ENCODE measurements at regions of chr1 and their contacts with region 1.

Region 1: DNA sequence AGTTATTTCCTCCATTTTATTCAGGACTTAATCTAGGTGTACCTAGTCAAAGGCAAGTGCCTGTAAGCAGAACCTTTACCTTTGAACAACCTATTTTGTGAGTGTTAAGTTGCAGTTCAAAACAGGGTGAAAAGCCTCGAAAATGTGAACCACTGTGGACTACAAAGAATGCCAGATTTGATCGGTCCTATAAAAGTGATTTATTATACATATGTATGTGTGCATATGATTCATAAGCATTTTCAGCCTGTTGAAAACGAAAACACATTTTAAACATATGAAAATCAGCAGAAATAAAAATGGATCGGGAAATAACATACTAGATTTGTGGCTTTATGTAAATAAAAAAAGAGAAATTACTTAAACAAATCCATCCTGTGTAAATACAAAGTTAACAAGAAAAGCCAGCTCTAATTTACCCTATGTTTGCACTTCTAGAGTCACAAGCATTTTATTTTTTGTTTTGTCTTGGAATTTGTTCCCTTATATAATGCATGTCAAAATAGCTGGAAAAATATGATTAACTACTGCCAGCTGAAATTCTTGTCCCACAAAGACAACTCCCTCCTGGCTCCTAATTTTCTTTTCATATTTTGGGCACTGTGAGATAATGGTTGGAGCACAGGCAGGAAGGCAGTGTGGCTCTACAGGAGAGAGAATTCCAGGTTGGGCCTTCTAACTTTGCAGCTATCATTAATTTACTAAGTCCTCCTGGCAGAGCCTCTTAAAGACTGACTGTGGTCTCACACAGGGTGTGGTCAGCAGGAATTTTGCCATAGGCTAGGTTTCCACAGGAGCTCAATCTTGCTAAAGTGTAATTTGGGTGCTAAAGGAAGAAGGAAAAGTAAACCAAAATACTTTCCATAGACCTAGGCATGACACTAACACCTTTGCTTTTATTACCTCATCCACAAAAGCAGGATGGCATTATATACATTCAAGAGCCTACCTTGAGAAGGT is 70.2 kb upstream of the CDC42BPA start:
- DNase-seq: no peak
- ATAC-seq: no peak
- H3K4me3 ChIP-seq: no peak overlapping the region
- H3K4me3 Mint-ChIP-seq: no peak overlapping the region
- H3K27ac ChIP-seq: no peak overlapping the region
- H3K27ac Mint-ChIP-seq: no peak overlapping the region
- H3K4me1 ChIP-seq: no peaks in the 10 kb centered on the region
- H3K4me1 Mint-ChIP-seq: no peaks in the 10 kb centered on the region
- H3K27me3 ChIP-seq: no peaks in the 10 kb centered on the region
- H3K27me3 Mint-ChIP-seq: peaks cover 11% of the 10 kb centered on the region
- CTCF ChIP-seq: no peak

Region 2: GRCh38 chr1:227946624-227947385 is 558.3 kb after region 1 on chr1:
- CTCF ChIA-PET with region 1: no interaction called
- POLR2A ChIA-PET with region 1: interaction called, 14 read pairs
- intact Hi-C with region 1: no loop called
- DNase-seq: peak; percentile 51
- ATAC-seq: peak; percentile 37
- H3K4me3 ChIP-seq: peak overlapping the region in 4 of 5 experiments; percentile 11 to 33 (median 16)
- H3K4me3 Mint-ChIP-seq: peak overlapping the region; percentile 71
- H3K27ac ChIP-seq: no peak overlapping the region
- H3K27ac Mint-ChIP-seq: no peak overlapping the region
- H3K4me1 ChIP-seq: peaks cover 15 to 21% of the 10 kb centered on the region in 2 donors
- H3K4me1 Mint-ChIP-seq: peaks cover 12% of the 10 kb centered on the region
- H3K27me3 ChIP-seq: peaks cover 0 to 37% (median 8%) of the 10 kb centered on the region in 4 experiments
- H3K27me3 Mint-ChIP-seq: peaks cover 27% of the 10 kb centered on the region
- CTCF ChIP-seq: peak; percentile 44

Measured in B cell (primary cell).